Activated naive CD8-positive, alpha-beta T cell treated with anti-CD3 and anti-CD28 coated beads, Interleukin-2, amount 10 ng/mL, durations not matched to agents 7 days and 5 days (primary cell): ENCODE measurements at regions of chr10 and their contacts with region 1.

Region 1: GRCh38 chr10:122419876-122420623 is 34.4 kb upstream of the ARMS2 start:
- DNase-seq: no peak
- ATAC-seq: no peak
- H3K4me3 Mint-ChIP-seq: no peak overlapping the region
- H3K27ac Mint-ChIP-seq: no peak overlapping the region
- H3K4me1 Mint-ChIP-seq: peaks cover 53% of the 10 kb centered on the region
- H3K27me3 Mint-ChIP-seq: no peaks in the 10 kb centered on the region

Region 2: DNA sequence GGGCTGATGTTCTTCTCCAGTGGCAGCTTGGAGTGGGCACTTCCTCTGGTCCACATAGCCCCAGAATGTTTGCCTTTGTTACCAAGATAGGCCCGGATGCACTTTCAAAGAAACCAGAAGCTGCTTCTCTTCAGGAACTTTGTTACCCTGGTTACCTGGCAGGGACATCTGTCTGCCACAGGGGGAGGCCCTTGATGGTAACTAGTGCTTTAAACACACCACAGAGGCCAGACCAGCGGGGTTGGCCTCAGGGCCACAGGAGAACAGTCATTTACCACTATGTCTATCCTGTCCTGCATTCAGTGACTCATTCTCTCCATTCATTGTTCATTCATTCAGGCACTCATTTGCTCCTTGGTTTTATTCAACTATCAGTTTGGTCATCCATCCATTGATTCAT is 57.4 kb before region 1 on chr10:
- POLR2A ChIA-PET with region 1: no interaction called
- DNase-seq: no peak
- ATAC-seq: peak; percentile 47
- H3K4me3 Mint-ChIP-seq: no peak overlapping the region
- H3K27ac Mint-ChIP-seq: no peak overlapping the region
- H3K4me1 Mint-ChIP-seq: peaks cover 5% of the 10 kb centered on the region
- H3K27me3 Mint-ChIP-seq: peaks cover 4% of the 10 kb centered on the region

Region 3: DNA sequence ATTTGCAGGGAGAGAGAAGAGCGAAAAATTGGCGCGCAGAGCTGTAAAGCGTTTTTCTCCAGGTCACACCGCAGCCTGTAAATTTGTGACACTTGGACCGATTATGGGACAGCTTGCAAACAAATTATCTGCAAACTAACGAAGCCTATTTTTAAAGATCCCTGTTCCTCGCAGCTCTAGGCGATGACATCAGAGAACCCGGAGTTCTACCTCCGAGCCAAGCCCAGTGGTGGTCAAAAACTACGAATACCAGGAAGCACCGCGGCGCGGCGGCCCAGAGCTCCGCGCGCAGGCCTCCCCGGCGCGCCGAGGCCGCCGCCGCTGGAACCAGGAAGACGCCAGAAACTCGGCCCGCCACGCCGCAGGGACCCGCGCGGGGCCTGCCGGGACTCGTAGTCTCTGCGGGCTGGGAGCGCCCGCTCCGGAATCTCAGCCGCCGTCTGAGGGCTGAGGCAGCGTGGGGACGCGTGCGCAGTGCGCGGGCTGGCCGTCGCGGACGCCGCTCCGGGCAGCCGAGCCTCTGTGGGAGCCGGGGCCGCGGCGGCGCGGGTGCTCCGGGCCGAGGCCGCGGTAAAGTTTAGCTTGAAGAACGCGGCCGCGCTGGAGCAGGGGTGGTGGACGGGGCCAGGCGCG is 45.7 kb before region 1 on chr10 and contains the start of gene PLEKHA1:
- POLR2A ChIA-PET with region 1: interaction called, 14 read pairs
- DNase-seq: peak; percentile 94
- ATAC-seq: peak; percentile 93
- H3K4me3 Mint-ChIP-seq: peak within 1 kb of the TSS; percentile 93
- H3K27ac Mint-ChIP-seq: peak within 1 kb of the TSS; percentile 93
- H3K4me1 Mint-ChIP-seq: peaks cover 23% of the 10 kb centered on the region
- H3K27me3 Mint-ChIP-seq: peaks cover 29% of the 10 kb centered on the region
- total RNA-seq, gene PLEKHA1: 26.6 to 29.2 TPM

Region 4: GRCh38 chr10:122565728-122566206 is 145.7 kb after region 1 on chr10:
- POLR2A ChIA-PET with region 1: no interaction called
- DNase-seq: peak; percentile 76
- ATAC-seq: peak; percentile 63
- H3K4me3 Mint-ChIP-seq: no peak overlapping the region
- H3K27ac Mint-ChIP-seq: no peak overlapping the region
- H3K4me1 Mint-ChIP-seq: peaks cover 16% of the 10 kb centered on the region
- H3K27me3 Mint-ChIP-seq: peaks cover 56% of the 10 kb centered on the region